ENCODE measurements at regions of chr6 and their contacts with region 1.

Region 1: DNA sequence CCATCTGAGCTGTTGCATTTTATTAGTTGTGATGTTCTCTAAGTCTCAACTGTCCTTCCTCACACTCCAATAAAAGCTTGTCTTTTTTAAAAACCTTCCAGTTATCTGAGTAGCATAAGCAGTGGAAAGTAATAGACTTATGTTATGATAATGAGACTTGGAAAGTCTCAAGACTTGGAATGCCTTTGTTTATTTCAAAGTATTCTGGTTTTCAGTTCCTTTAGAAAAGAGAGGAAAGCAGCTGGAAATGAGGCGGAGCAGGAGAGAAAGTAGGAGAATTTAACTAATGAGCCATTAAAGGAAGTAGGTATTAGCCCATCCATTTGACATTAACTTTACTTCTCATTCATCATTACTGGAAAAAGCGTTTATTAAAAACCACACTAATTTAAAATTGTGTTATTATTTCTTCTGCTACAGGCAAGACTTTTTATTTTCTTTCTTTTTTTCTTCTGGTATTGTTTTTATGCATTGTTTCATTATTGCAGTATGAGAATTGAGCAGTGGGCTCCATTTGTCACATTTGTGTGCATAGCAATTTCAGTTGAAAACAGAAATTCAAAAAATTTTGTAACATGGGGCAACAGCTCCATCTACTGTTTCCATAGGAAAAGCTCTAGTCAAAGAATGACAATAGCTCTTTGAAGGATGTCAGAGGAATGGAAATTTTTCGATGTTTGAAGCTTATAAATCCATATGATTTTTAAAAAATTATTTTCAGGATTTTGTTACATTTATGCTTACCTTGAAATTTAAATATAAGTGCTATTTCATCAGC is 194.8 kb downstream of the COL9A1 start:
- DNase-seq: peak; percentile 46
- H3K4me3 Mint-ChIP-seq: no peak overlapping the region
- H3K27ac Mint-ChIP-seq: no peak overlapping the region
- H3K4me1 Mint-ChIP-seq: no peaks in the 10 kb centered on the region
- H3K27me3 Mint-ChIP-seq: peaks cover 21% of the 10 kb centered on the region
- CTCF ChIP-seq: peak; percentile 71

Region 2: DNA sequence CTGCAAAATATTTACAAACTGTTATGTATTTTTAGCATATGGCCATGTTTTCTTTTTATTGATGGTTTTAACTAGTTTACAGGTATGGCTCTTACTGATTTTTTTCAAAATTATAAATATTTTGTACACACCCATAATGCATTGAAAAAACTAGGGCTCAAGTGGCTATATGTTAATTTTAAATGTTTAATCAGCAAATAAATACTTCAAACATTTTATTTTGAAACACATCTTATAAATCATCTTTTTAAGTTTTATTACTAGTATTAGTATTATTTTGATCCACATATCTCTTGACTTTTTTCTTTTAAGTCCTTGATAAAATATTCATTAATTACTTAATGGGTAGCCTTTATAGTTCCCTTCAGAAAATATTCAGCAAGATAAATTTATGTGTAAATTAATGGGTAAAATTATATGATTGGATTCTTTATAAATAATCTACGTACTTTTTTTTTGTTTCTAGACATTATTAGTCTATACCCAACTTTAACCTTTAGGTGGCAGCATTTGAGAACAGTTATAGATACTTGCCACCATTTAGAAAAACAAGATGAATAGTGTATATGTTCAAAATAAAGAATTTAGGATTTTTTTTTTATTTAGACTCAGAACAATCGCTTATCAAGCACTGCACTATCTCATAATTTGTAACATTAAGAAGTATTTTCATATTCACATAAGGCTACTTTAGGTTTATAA is 1231.1 kb before region 1 on chr6:
- CTCF ChIA-PET with region 1: no interaction called
- intact Hi-C with region 1: loop called (anchors 5 kb)
- DNase-seq: no peak
- H3K4me3 Mint-ChIP-seq: no peak overlapping the region
- H3K27ac Mint-ChIP-seq: no peak overlapping the region
- H3K4me1 Mint-ChIP-seq: no peaks in the 10 kb centered on the region
- H3K27me3 Mint-ChIP-seq: no peaks in the 10 kb centered on the region
- CTCF ChIP-seq: peak; percentile 46

Region 3: GRCh38 chr6:69164564-69165229 is 943.3 kb before region 1 on chr6:
- CTCF ChIA-PET with region 1: interaction called, 3 read pairs
- intact Hi-C with region 1: loop called (anchors 10 kb)
- DNase-seq: peak; percentile 18
- H3K4me3 Mint-ChIP-seq: no peak overlapping the region
- H3K27ac Mint-ChIP-seq: no peak overlapping the region
- H3K4me1 Mint-ChIP-seq: no peaks in the 10 kb centered on the region
- H3K27me3 Mint-ChIP-seq: no peaks in the 10 kb centered on the region
- CTCF ChIP-seq: no peak

Region 4: DNA sequence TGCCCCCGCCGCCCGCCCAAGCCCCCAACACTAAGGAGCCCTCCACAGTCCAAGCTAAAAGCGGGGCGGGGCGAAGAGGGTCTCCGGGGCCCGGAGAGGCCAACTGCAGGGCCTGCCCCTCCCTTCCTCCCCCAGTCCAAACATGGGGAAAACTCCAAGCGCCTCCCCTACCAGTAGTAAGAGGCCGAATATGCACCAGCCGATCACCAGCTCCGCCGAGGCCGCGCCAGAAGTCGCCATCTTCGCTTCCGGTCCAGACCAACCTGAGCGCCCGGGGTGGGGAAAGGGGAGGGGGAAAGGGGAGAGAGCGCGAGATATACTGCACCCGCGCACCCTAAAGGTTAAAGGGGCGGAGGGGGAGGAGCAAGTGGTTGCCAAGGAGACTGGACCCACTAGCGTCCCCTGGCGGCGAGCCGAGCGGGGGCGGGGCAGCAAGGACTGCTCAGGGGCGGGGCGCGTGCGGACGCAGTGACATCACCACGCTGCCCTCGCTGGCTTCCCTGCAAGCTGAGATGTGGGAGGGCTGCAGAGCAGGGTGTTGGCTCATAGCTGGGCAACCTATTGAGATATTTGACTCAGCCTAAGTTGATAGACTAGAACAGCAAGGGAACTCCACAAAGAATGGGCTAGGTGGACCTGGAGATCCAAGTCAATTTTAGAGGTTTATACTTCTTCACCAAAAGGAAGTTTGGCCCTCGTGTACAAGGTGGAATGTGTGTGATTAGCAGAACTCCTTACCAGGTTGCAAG is 311.2 kb before region 1 on chr6 and contains the start of gene LMBRD1:
- CTCF ChIA-PET with region 1: interaction called, 13 read pairs
- intact Hi-C with region 1: no loop called
- DNase-seq: peak; percentile 99
- H3K4me3 Mint-ChIP-seq: peak within 1 kb of the TSS; percentile 97
- H3K27ac Mint-ChIP-seq: peak within 1 kb of the TSS; percentile 99
- H3K4me1 Mint-ChIP-seq: peaks cover 35% of the 10 kb centered on the region
- H3K27me3 Mint-ChIP-seq: no peaks in the 10 kb centered on the region
- CTCF ChIP-seq: peak; percentile 95
- total RNA-seq, gene LMBRD1: 35.7 and 36.6 TPM in 2 replicates

Region 5: DNA sequence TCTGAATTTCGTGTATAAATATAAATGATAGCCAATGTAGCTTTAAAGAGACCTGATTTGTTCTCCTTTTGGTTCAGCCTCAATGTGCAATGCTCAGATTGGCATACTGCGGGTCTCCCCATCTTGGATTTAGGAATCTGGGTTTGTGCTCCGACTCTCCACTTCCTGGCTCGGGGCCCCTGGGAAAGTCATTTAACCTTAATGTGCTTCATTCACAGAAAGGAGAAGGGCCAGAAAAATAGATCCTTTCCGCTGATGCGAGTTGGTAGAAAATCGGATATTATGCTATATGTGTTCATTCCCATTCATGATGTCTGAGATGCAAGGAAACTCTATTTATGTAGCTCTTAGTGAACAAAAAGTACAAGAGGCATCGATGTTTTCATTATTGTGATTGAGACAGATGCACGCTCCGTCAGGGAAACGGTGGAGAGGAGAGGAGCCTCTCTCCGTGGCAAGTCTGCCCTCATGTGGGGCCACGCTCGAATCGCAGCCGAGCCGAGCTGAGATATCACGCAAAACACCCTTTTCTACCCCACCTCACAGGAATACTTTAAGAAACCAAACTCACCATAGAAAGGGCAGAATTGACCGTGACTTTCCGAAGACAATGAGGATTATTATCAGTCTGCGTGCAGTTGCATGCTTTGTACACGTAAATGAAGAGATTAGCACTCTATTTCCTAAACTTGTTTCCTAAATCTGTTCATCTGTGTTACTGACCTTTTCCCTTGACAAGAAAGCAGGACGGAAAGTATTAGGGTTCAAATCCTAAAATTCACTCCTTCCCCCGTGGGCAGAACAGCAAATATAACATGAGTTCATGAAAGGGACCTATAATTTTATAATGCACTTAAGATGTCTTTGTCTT is 58.3 kb after region 1 on chr6:
- CTCF ChIA-PET with region 1: no interaction called
- intact Hi-C with region 1: loop called (anchors 5 kb)
- DNase-seq: peak; percentile 77
- H3K4me3 Mint-ChIP-seq: peak overlapping the region; percentile 56
- H3K27ac Mint-ChIP-seq: no peak overlapping the region
- H3K4me1 Mint-ChIP-seq: peaks cover 16% of the 10 kb centered on the region
- H3K27me3 Mint-ChIP-seq: peaks cover 44% of the 10 kb centered on the region
- CTCF ChIP-seq: peak; percentile 68

Region 6: DNA sequence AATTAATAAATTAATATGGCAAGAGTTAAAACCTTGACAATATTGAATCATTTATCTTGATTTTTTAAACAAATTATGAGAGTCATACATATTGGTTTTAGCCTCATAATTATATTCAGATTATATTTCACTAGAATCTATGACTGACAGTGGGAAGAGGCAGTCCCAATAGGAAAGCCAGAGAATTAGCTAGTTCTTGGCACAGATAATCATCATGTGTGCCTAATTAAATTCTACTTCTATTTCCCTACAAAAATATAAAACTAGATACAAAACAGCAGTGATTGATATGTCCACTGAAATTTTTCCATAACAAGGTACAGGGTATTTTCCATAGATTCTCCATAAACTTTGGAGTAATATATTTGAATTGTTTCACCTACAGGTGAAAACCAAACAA is 156.3 kb after region 1 on chr6:
- CTCF ChIA-PET with region 1: no interaction called
- intact Hi-C with region 1: no loop called
- DNase-seq: no peak
- H3K4me3 Mint-ChIP-seq: no peak overlapping the region
- H3K27ac Mint-ChIP-seq: no peak overlapping the region
- H3K4me1 Mint-ChIP-seq: no peaks in the 10 kb centered on the region
- H3K27me3 Mint-ChIP-seq: peaks cover 30% of the 10 kb centered on the region
- CTCF ChIP-seq: no peak